ENCODE measurements at regions of chr19 and their contacts with region 1.

Region 1: DNA sequence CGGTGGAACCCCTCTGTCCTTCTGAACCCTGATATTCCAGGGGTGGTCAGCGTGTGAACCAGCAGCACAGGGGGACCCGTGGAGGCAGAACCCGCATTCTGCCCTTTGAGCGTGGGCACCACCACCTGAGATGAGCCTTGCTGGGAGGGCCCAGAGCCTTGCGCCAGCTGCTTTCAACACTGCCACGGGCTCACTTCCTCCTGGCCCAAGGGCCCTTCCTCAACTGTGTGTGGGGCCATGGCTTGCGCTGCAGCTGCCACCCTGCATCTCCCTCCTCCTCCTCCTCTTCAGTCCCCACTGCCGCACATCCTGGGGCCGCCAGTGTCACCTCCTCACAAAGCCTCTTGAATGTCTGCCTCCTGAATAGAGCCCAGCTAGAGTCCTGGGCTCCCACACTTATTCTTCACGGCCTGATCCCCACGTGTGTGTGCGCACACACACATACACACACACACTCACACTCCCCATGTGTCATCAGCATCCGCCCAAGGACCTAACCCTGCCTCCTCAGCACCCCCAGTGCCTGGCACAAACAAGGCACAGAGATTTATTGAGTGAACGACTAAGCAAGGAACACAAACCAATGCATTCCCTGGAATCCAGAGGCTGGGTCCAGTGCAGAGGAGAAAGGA is 26.9 kb upstream of the TMEM160 start:
- DNase-seq: no peak
- H3K4me3 ChIP-seq: no peak overlapping the region
- H3K27ac ChIP-seq: no peak overlapping the region
- H3K4me1 ChIP-seq: peaks cover 5% of the 10 kb centered on the region
- H3K27me3 ChIP-seq: no peaks in the 10 kb centered on the region
- CTCF ChIP-seq: no peak

Region 2: DNA sequence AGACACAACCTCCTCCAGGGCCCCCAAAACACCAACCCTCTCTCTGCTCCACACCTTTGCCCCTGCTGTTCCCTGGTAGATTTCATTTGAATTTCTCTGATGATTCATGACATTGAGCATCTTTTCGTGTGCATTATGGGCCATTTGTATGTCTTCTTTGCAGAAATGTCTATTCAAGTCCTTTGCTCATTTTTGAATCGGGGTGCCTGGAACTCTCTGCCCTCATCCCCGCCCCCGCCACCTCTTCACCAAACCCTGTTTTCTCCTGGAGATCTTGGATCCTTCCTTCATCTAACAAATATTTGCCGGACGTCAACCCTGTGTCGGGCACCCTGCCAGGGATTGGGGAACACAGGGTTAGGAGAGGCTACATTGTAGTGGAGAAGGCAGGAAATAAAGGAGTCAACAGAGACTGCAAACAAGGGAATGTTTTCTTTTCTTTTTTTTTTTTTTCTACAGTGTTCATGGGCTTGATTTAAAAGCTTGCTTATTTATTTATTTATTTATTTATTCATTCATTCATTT is 261.4 kb before region 1 on chr19:
- CTCF ChIA-PET with region 1: no interaction called
- POLR2A ChIA-PET with region 1: no interaction called
- intact Hi-C with region 1: no loop called
- DNase-seq: peak in 1 of 2 experiments; percentile 40
- H3K4me3 ChIP-seq: no peak overlapping the region
- H3K27ac ChIP-seq: no peak overlapping the region
- H3K4me1 ChIP-seq: 0 out of 2 replicates have a peak, but pooled peaks cover 7% of the 10 kb centered on the region
- H3K27me3 ChIP-seq: no peaks in the 10 kb centered on the region
- CTCF ChIP-seq: no peak

Region 3: DNA sequence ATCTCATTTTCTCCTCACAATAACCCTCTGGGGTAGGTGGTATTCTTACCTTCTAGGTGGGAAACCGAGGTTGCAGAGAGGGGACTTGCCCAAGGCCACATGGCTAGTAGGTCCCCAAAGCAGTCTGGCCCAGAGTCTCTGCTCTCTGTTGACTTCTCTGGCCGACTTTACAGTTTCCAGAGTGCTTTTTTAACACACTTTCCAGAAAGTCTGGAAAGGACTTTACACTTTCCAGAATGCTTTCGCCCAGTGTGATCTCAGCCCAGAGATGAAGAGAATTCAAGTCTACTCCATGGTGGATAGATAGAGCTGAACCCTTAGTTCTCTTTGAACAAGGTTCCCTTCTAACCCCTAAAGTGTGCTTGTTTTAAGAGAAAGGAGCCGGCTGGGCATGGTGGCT is 202.3 kb before region 1 on chr19:
- CTCF ChIA-PET with region 1: interaction called, 11 read pairs
- POLR2A ChIA-PET with region 1: no interaction called
- intact Hi-C with region 1: no loop called
- DNase-seq: no peak
- H3K4me3 ChIP-seq: no peak overlapping the region
- H3K27ac ChIP-seq: peak overlapping the region; percentile 66
- H3K4me1 ChIP-seq: peaks cover 62% of the 10 kb centered on the region
- H3K27me3 ChIP-seq: no peaks in the 10 kb centered on the region
- CTCF ChIP-seq: no peak

Region 4: DNA sequence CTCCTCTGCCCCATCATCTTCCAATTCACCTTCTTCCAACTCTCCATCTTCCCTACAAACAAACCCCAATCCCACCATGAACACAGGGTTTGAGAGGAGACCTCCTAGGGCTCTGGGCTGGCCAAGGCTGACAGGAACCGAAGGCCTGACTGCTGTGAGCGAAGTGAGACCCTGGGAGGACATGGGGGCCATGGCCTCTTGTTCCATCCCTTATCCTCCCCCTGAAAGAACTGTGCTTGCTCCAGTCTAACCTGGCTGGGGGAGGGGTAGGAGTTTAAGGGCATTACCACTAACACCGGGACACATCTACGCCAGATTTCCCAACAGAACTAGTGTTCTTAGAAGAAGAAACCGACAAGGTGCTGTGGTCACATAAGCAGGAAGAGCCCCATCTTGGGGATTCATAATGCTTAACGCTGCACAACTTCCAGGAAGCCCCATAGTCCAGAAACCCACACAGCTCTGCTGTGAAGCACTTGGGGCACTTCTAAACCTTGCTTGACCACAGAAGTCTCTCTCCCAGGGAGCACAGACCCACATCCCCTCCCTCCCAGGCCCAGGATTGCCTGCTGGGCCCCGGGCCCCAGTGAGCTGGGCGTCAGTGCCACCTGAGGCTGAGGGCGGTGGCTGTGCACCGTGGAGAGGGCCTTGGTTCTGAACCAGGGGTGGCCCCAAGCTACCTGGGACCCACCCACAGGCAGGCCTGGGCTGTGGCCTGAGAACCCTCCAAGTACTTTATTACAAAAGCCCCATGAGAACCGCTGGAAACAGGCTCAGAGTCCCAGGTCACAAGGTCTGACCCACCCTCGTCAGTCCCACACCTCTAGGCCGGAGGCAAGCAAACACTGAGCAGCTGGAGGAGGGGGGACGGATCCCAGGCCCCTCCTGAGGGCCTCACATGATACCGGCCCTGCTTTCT is 19.5 kb after region 1 on chr19:
- CTCF ChIA-PET with region 1: no interaction called
- POLR2A ChIA-PET with region 1: no interaction called
- intact Hi-C with region 1: no loop called
- DNase-seq: peak in 1 of 2 experiments; percentile 33
- H3K4me3 ChIP-seq: no peak overlapping the region
- H3K27ac ChIP-seq: peak overlapping the region; percentile 77
- H3K4me1 ChIP-seq: peaks cover 42% of the 10 kb centered on the region
- H3K27me3 ChIP-seq: no peaks in the 10 kb centered on the region
- CTCF ChIP-seq: no peak

Region 5: GRCh38 chr19:47124937-47125668 is 49.8 kb after region 1 on chr19:
- CTCF ChIA-PET with region 1: interaction called, 6 read pairs
- POLR2A ChIA-PET with region 1: interaction called, 13 read pairs
- intact Hi-C with region 1: loop called (anchors 1 kb)
- DNase-seq: peak; percentile 39 to 75
- H3K4me3 ChIP-seq: no peak overlapping the region
- H3K27ac ChIP-seq: peak overlapping the region; percentile 65
- H3K4me1 ChIP-seq: peaks cover 40% of the 10 kb centered on the region
- H3K27me3 ChIP-seq: no peaks in the 10 kb centered on the region
- CTCF ChIP-seq: peak; percentile 96

Measured in PC-9 (cell line).